ENCODE measurements at regions of chr15 and their contacts with region 1.

Region 1: GRCh38 chr15:59632714-59633113 is 21.1 kb downstream of the GCNT3 start:
- DNase-seq: no peak
- H3K4me3 ChIP-seq: no peak overlapping the region
- H3K27ac ChIP-seq: no peak overlapping the region
- H3K4me1 ChIP-seq: no peaks in the 10 kb centered on the region
- H3K27me3 ChIP-seq: no peaks in the 10 kb centered on the region
- CTCF ChIP-seq: peak; percentile 43 to 67

Region 2: DNA sequence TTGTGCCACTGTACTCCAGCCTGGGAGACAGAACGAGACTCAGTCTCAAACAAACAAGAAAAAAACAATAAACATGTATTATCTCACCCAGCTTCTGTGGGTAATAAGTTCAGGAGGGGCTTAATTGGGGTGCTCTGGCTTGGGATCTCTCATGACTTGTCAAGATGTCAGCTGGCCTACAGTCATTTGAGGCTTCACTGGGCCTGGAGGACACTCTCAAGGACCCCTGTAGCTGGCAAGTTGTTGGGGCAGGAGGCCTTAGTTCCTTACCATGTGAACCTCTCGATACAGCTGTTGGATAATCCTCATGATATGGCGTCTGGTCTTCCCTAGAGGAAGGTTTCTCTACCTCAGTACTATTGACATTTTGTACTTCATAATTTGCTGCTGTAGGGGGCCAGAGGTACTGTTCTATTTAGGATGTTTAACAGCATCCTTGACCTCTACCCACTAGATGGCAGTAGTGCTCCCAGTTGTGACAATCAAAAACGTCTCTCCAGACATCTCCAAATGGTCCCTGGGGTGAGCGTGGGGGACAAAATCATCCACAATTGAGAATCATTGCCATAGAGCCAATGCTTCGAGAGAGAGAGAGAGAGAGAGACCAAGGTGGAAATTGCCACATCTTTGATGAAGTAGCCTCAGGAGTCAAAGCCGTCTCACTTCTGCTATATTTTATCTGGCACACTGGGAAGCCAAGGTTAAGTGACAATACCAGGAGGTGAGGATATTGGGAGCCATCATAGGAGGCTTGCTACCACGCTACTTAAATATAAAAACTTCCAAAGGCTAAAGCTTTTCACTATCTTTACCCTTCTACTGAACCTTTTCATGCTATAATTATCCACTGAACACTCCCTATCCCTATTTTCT is 675.4 kb before region 1 on chr15:
- CTCF ChIA-PET with region 1: no interaction called
- dilution Hi-C with region 1: no loop called
- in situ Hi-C with region 1: loop called in 1 of 2 experiments (anchors 25 kb)
- intact Hi-C with region 1: no loop called
- DNase-seq: peak; percentile 44
- H3K4me3 ChIP-seq: no peak overlapping the region
- H3K27ac ChIP-seq: no peak overlapping the region
- H3K4me1 ChIP-seq: peaks cover 8% of the 10 kb centered on the region
- H3K27me3 ChIP-seq: no peaks in the 10 kb centered on the region
- CTCF ChIP-seq: peak; percentile 78 to 88

Region 3: DNA sequence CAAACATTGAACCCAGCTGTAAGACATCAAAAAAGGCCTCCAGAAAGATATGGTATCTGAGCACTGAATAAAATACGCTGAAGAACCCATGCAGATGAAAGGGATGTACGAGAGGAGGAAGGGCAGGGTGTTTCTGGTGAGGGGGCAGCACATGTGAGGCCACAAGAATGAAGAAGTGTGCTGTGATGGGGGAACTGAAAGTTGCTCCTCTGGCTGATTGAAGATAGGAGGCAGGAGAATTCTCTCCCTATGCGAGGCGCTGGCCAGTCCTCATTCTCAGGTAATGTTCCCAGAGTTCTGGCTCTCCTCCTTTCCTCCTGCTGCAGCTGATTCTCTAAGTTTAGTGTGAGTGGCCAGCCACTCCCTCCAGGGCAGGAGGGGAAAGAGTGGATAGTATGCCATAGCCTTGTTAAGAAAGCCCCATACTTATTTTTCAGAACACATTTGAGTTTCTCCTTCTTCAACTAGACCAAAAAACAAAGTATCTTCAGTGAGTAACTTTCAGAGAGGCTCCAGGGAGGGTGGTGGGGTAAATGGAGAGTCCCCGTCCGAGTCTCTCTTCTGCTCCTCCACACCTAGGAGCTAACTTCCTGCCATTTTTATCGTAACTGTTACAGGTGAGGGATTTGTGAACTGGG is 233.1 kb before region 1 on chr15:
- CTCF ChIA-PET with region 1: no interaction called
- dilution Hi-C with region 1: no loop called
- in situ Hi-C with region 1: no loop called
- intact Hi-C with region 1: no loop called
- DNase-seq: no peak
- H3K4me3 ChIP-seq: no peak overlapping the region
- H3K27ac ChIP-seq: no peak overlapping the region
- H3K4me1 ChIP-seq: peaks cover 10% of the 10 kb centered on the region
- H3K27me3 ChIP-seq: no peaks in the 10 kb centered on the region
- CTCF ChIP-seq: no peak